CD4-positive, alpha-beta memory T cell (primary cell): ENCODE measurements at regions of chr16 and their contacts with region 1.

Region 1: GRCh38 chr16:81403616-81404373 is 40.8 kb upstream of the CMIP start:
- DNase-seq: peak; percentile 63 to 77 (median 69)
- H3K4me3 ChIP-seq: peak overlapping the region in 1 of 2 donors; percentile 34
- H3K4me3 Mint-ChIP-seq: peak overlapping the region in 3 of 8 donors; percentile 10 to 46 (median 31)
- H3K27ac ChIP-seq: no peak overlapping the region
- H3K27ac Mint-ChIP-seq: no peak overlapping the region
- H3K4me1 ChIP-seq: peaks cover 8% of the 10 kb centered on the region
- H3K4me1 Mint-ChIP-seq: peaks cover 0 to 4% (median 0%) of the 10 kb centered on the region in 4 donors
- H3K27me3 ChIP-seq: no peaks in the 10 kb centered on the region
- H3K27me3 Mint-ChIP-seq: no peaks in the 10 kb centered on the region

Region 2: GRCh38 chr16:81136390-81137342 is 267.1 kb before region 1 on chr16:
- CTCF ChIA-PET with region 1: no interaction called
- POLR2A ChIA-PET with region 1: no interaction called
- intact Hi-C with region 1: no loop called
- DNase-seq: no peak
- H3K4me3 ChIP-seq: no peak overlapping the region
- H3K4me3 Mint-ChIP-seq: no peak overlapping the region
- H3K27ac ChIP-seq: no peak overlapping the region
- H3K27ac Mint-ChIP-seq: no peak overlapping the region
- H3K4me1 ChIP-seq: no peaks in the 10 kb centered on the region
- H3K4me1 Mint-ChIP-seq: no peaks in the 10 kb centered on the region
- H3K27me3 ChIP-seq: no peaks in the 10 kb centered on the region
- H3K27me3 Mint-ChIP-seq: peaks cover 0 to 2% of the 10 kb centered on the region in 2 donors

Region 3: DNA sequence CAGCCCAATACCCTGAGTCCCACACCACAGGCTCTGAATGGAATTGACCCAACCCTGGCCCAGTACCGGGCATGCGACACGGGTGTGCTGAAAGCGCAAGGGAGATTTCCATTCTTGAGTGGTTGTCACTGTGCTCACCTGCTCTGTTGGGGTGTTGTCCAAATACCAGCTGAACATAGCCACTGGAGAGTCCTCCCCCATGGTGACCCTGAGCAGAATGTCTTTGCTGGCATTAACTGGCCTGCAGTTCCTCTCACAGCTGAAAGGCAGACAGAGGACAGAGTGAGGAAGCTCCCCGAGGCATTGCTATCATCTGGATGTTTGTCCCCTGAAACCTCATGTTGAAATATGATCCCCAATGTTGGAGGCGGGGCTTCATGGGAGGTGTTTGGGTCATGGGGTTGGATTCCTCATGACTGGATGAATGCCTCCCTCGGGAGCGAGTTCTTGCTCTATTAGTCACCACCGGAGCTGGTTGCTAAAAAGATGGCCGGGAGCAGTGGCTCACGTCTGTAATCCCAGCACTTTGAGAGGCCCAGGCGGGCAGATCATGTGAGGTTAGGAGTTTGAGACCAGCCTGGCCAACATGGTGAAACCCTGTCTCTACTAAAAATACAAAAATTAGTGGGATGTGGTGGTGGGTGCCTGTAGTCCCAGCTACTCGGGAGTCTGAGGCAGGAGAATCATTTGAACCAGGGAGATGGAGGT is 222.6 kb before region 1 on chr16:
- CTCF ChIA-PET with region 1: no interaction called
- POLR2A ChIA-PET with region 1: no interaction called
- intact Hi-C with region 1: no loop called
- DNase-seq: no peak
- H3K4me3 ChIP-seq: no peak overlapping the region
- H3K4me3 Mint-ChIP-seq: no peak overlapping the region
- H3K27ac ChIP-seq: no peak overlapping the region
- H3K27ac Mint-ChIP-seq: no peak overlapping the region
- H3K4me1 ChIP-seq: no peaks in the 10 kb centered on the region
- H3K4me1 Mint-ChIP-seq: peaks cover 0 to 2% (median under 1%) of the 10 kb centered on the region in 4 donors
- H3K27me3 ChIP-seq: peaks cover 4% of the 10 kb centered on the region
- H3K27me3 Mint-ChIP-seq: peaks cover 1 to 10% of the 10 kb centered on the region in 2 donors

Region 4: DNA sequence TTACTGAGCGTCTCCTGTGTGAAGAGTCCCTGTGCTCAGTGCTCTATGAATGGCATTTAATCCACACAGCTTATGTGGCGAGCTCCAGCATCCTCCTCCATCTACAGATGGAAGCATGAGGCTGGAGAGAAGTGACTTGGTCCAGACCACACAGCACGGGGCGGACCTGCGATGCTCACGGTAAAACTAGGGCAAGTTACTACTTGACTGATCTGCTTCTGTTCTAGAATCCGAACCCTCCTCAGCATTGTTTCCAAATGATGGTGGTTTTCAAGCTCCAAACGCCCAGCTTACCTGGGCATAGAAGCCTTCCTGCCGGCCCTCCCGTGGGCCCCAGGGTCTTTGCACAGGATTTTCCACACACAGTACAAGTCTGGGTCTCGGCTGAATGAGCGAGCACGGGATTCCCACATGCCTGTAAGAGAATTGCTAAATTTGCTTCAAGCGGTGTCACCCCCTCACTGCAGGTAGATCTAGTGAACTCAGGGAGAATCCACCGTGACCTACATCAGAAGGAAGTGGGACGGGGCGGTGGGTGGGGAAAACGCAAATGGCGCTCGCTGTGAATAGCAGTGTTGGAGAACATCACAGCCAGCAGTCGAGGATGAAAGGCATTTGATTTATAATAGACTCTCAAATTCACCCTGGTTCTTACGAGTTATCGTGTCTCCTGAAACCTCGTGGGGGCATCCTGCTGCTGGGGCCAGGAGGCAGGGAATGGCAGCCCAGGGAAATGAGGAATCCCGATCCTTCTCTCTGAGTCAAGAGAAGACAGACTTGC is 141.9 kb after region 1 on chr16:
- CTCF ChIA-PET with region 1: no interaction called
- POLR2A ChIA-PET with region 1: no interaction called
- intact Hi-C with region 1: no loop called
- DNase-seq: peak in 1 of 5 donors; percentile 33
- H3K4me3 ChIP-seq: no peak overlapping the region
- H3K4me3 Mint-ChIP-seq: peak overlapping the region in 3 of 8 donors; percentile 15 to 50 (median 32)
- H3K27ac ChIP-seq: no peak overlapping the region
- H3K27ac Mint-ChIP-seq: peak overlapping the region in 5 of 7 donors; percentile 55 to 84 (median 77)
- H3K4me1 ChIP-seq: peaks cover 15% of the 10 kb centered on the region
- H3K4me1 Mint-ChIP-seq: peaks cover 22 to 62% (median 41%) of the 10 kb centered on the region in 4 donors
- H3K27me3 ChIP-seq: no peaks in the 10 kb centered on the region
- H3K27me3 Mint-ChIP-seq: no peaks in the 10 kb centered on the region

Region 5: GRCh38 chr16:81623363-81624102 is 219.7 kb after region 1 on chr16:
- CTCF ChIA-PET with region 1: interaction called, 32 read pairs
- POLR2A ChIA-PET with region 1: no interaction called
- intact Hi-C with region 1: loop called (anchors 1 kb)
- DNase-seq: peak in 4 of 5 donors; percentile 52 to 61 (median 58)
- H3K4me3 ChIP-seq: no peak overlapping the region
- H3K4me3 Mint-ChIP-seq: no peak overlapping the region
- H3K27ac ChIP-seq: no peak overlapping the region
- H3K27ac Mint-ChIP-seq: peak overlapping the region; percentile 6 to 89 (median 72)
- H3K4me1 ChIP-seq: peaks cover 6% of the 10 kb centered on the region
- H3K4me1 Mint-ChIP-seq: peaks cover 4 to 9% (median 7%) of the 10 kb centered on the region in 4 donors
- H3K27me3 ChIP-seq: no peaks in the 10 kb centered on the region
- H3K27me3 Mint-ChIP-seq: no peaks in the 10 kb centered on the region

Region 6: DNA sequence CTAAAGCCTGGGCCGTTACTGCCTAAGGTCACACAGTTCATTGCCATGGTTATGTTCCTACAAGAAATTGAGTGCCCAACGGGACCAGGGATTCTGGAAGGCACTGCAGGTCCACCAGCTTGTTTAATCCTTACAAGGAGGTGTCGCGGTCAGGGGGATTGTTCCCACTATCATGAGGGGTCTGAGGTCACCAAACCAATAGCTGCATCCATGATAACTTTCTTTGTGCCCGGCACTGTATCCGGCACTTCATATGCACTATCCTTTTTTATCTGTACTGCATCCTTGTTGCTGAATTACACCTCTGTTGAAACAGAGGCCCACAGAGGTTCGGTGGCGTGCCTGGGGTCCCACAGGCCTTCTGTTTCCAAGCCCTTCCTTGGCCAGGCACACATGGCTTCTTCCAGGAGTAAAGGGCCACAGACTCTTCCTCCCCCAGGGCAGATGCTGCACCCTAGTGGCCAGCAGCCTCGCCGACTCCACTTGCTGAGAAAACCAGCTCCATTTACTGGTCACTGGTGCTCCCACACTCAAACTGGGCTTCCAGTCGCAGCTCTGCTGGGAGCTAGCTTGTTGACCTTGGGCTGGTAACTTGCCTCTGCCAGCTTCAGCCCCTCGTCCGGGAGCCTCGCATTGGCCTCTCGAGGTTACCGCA is 293.3 kb after region 1 on chr16:
- CTCF ChIA-PET with region 1: interaction called, 22 read pairs
- POLR2A ChIA-PET with region 1: no interaction called
- intact Hi-C with region 1: loop called (anchors 1 kb)
- DNase-seq: peak in 3 of 5 donors; percentile 19 to 39 (median 28)
- H3K4me3 ChIP-seq: no peak overlapping the region
- H3K4me3 Mint-ChIP-seq: no peak overlapping the region
- H3K27ac ChIP-seq: no peak overlapping the region
- H3K27ac Mint-ChIP-seq: peak overlapping the region in 3 of 7 donors; percentile 17 to 76 (median 57)
- H3K4me1 ChIP-seq: no peaks in the 10 kb centered on the region
- H3K4me1 Mint-ChIP-seq: peaks cover 0 to 5% (median under 1%) of the 10 kb centered on the region in 4 donors
- H3K27me3 ChIP-seq: no peaks in the 10 kb centered on the region
- H3K27me3 Mint-ChIP-seq: no peaks in the 10 kb centered on the region

Region 7: DNA sequence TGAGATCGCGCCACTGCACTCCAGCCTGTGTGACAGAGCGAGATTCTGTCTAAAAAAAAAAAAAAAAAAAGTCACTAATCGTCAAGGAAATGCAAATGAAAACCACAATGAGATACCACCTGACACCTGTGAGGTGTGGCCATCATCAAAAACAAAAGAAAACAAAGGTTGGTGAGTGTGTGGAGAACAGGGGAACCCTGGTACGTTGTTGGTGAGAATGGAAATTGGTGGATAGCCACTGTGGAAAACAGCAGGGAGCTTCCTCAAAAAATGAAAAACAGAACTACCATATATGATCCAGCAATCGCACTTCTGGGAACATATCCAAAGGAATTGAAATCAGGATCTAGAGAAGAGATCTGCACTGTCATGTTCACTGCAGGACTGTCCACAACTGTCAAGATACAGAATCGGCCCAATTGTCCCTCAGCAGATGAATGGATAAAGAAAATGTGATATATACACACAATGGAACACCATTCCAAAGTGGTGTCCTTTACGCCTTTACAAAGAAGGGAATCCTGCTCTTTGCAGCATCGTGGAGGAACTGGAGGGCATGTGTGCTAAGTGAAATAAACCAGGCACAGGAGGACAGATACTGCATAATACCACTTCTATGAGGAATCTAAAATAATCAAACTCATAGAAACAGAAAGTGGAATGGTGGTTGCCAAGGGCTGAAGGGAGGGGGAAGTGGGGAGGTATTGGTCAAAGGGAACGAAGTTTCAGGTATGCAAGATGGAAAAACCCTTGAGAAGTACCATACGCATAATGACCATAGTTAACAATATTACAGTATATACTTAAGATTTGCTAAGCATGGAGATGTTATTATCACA is 311.8 kb after region 1 on chr16:
- CTCF ChIA-PET with region 1: interaction called, 11 read pairs
- POLR2A ChIA-PET with region 1: no interaction called
- intact Hi-C with region 1: no loop called
- DNase-seq: peak; percentile 73 to 82 (median 75)
- H3K4me3 ChIP-seq: peak overlapping the region in 1 of 2 donors; percentile 48
- H3K4me3 Mint-ChIP-seq: peak overlapping the region; percentile 74 to 91 (median 84)
- H3K27ac ChIP-seq: peak overlapping the region; percentile 45
- H3K27ac Mint-ChIP-seq: peak overlapping the region; percentile 86 to 97 (median 95)
- H3K4me1 ChIP-seq: peaks cover 49% of the 10 kb centered on the region
- H3K4me1 Mint-ChIP-seq: peaks cover 37 to 54% (median 47%) of the 10 kb centered on the region in 4 donors
- H3K27me3 ChIP-seq: no peaks in the 10 kb centered on the region
- H3K27me3 Mint-ChIP-seq: no peaks in the 10 kb centered on the region

Region 8: DNA sequence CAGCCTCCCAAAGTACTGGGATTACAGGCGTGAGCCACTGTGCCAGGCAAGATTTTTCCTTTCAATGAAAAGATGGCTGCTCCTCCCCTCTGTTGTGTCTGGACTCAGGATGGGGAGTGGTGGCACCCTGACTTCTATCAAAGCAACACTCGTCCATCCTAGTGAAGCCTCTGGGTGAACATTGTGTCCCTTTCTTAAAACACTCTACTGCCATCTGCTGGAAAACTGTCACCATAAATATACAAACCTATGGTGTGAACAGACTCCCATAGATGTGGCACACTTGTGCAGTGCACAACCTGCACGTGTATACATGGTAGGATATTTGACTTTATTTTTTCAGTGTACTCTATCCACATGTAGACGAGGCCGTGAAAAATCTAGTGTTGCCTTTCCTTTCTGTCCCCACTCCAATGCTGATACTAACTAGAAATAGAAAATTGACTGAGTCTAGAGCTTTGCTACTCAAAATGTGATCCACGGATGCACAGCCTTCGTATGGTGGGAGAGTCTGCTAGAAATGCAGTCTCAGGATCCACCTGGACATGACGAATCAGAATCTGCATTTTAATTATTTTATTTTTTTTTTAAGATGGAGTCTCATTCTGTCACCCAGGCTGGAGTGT is 319.4 kb after region 1 on chr16:
- CTCF ChIA-PET with region 1: interaction called, 43 read pairs
- POLR2A ChIA-PET with region 1: no interaction called
- intact Hi-C with region 1: loop called (anchors 1 kb)
- DNase-seq: peak; percentile 61 to 76 (median 73)
- H3K4me3 ChIP-seq: no peak overlapping the region
- H3K4me3 Mint-ChIP-seq: peak overlapping the region in 1 of 8 donors; percentile 52
- H3K27ac ChIP-seq: no peak overlapping the region
- H3K27ac Mint-ChIP-seq: peak overlapping the region in 4 of 7 donors; percentile 14 to 84 (median 70)
- H3K4me1 ChIP-seq: peaks cover 11% of the 10 kb centered on the region
- H3K4me1 Mint-ChIP-seq: peaks cover 11 to 29% (median 13%) of the 10 kb centered on the region in 4 donors
- H3K27me3 ChIP-seq: no peaks in the 10 kb centered on the region
- H3K27me3 Mint-ChIP-seq: no peaks in the 10 kb centered on the region

Region 9: DNA sequence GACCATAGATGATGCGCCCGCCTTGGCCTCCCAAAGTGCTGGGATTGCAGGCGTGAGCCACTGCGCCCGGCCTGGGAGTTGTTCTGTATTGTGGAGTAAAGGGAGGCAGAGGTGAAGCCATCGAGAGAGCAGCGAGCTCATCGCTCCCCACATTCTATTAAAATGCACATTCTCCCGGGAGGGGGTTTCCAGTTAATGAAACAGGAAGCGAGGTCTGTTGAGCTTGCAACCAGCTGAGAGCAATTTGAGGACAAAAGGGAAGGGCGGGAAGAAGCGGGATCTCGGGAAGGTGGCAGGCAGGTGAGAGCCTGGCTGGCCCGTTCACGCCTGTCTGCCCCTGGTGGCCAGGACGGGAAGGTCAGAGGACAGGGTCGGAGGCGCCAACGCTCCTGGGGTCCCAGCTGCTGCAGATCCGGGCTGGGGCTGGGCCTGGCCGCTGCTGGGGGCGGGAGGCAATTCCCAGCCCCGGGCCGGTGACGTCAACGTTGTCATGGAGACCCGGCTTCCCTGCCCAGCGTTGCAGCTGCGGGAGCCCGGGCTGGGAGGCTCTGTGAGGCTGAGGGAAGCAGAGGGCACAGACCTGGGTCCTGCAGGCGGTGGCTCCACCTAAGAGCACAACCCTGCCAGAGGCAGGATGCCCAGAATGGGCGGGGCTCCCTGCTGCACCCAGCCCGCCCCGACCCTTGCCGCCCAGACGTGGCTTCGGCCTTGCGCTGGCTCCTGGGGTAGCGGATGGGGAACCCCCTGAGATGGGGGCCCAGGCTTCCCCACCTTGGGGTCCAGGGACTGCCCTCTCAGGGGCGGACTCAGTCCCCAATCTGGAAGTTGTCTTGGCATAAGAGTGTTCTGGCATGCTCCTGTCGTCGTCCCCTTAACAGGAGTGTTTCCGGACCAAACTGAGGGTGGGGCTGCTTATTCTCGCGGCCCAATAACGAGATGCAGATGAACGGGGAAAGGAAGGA is 326.6 kb after region 1 on chr16:
- CTCF ChIA-PET with region 1: interaction called, 6 read pairs
- POLR2A ChIA-PET with region 1: no interaction called
- intact Hi-C with region 1: loop called (anchors 2 kb)
- DNase-seq: peak; percentile 42 to 73 (median 58)
- H3K4me3 ChIP-seq: peak overlapping the region; percentile 11 to 25
- H3K4me3 Mint-ChIP-seq: peak overlapping the region; percentile 85 to 93 (median 88)
- H3K27ac ChIP-seq: peak overlapping the region; percentile 65
- H3K27ac Mint-ChIP-seq: peak overlapping the region; percentile 78 to 97 (median 93)
- H3K4me1 ChIP-seq: peaks cover 12% of the 10 kb centered on the region
- H3K4me1 Mint-ChIP-seq: peaks cover 8 to 25% (median 17%) of the 10 kb centered on the region in 4 donors
- H3K27me3 ChIP-seq: no peaks in the 10 kb centered on the region
- H3K27me3 Mint-ChIP-seq: no peaks in the 10 kb centered on the region

Region 10: DNA sequence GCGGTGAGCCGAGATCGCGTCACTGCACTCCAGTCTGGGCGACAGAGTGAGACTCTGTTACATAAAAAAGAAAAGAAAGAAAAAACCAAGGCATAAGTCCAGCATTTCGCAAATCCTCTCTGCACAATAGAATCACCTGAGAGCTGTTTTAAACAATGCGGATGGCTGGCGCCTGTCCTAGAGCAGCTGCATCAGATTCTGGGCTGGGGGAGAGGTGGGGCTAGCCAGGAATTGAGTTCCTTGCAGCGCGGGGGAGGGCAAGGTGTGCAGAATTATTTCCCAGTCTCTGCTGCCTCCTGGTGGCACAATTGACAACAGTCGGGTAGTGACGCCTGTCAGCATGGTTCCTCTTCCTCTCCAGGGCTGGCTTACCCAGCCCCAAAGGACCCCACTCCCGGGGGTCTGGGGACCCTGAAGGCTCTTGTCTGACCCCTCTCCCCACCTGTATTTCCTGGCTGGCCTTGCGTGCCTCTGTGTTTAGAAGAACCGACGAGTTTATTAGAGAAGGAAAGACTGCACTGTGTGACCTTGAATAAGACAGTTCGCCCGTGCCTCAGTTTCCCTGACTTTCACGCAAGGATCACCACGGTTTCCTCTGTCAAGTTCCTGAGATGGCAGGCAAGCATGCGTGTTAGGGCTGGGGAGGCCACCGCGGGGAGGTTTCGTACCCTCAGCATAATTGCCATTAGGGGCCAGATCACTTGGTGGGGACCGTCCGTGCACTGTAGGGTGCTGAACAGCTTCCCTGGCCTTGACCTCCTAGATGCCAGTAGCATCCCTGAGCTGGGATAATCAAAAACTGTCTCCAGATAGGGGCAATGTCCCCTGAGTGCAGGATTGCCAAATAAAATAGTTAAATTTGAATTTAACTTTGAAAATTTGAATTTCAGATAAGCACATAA is 334.3 kb after region 1 on chr16:
- CTCF ChIA-PET with region 1: interaction called, 17 read pairs
- POLR2A ChIA-PET with region 1: interaction called, 4 read pairs
- intact Hi-C with region 1: loop called (anchors 1 kb)
- DNase-seq: peak; percentile 80 to 84 (median 81)
- H3K4me3 ChIP-seq: peak overlapping the region in 1 of 2 donors; percentile 3
- H3K4me3 Mint-ChIP-seq: peak overlapping the region; percentile 67 to 82 (median 75)
- H3K27ac ChIP-seq: no peak overlapping the region
- H3K27ac Mint-ChIP-seq: peak overlapping the region in 5 of 7 donors; percentile 22 to 78 (median 30)
- H3K4me1 ChIP-seq: peaks cover 4% of the 10 kb centered on the region
- H3K4me1 Mint-ChIP-seq: peaks cover 0 to 12% (median 7%) of the 10 kb centered on the region in 4 donors
- H3K27me3 ChIP-seq: no peaks in the 10 kb centered on the region
- H3K27me3 Mint-ChIP-seq: no peaks in the 10 kb centered on the region